Cardiac septum (tissue), 1 donor: ENCODE measurements at regions of chr3 and their contacts with region 1.

Region 1: GRCh38 chr3:186806089-186807055 is at the start of gene RFC4:
- DNase-seq: peak; percentile 94
- total RNA-seq, gene RFC4: 6.4 TPM

Region 2: GRCh38 chr3:186783073-186783730 is 23.2 kb before region 1 on chr3 and contains the start of gene EIF4A2:
- intact Hi-C with region 1: loop called (anchors 2 kb)
- DNase-seq: peak; percentile 95
- total RNA-seq, gene EIF4A2: 361 TPM

Region 3: GRCh38 chr3:186826976-186827731 is 20.8 kb after region 1 on chr3:
- intact Hi-C with region 1: loop called (anchors 1 kb)
- DNase-seq: peak; percentile 90

Region 4: GRCh38 chr3:186909078-186909853 is 102.9 kb after region 1 on chr3:
- intact Hi-C with region 1: no loop called
- DNase-seq: no peak